Gastrocnemius medialis (tissue), 4 donors: ENCODE measurements at regions of chr4 and their contacts with region 1.

Region 1: DNA sequence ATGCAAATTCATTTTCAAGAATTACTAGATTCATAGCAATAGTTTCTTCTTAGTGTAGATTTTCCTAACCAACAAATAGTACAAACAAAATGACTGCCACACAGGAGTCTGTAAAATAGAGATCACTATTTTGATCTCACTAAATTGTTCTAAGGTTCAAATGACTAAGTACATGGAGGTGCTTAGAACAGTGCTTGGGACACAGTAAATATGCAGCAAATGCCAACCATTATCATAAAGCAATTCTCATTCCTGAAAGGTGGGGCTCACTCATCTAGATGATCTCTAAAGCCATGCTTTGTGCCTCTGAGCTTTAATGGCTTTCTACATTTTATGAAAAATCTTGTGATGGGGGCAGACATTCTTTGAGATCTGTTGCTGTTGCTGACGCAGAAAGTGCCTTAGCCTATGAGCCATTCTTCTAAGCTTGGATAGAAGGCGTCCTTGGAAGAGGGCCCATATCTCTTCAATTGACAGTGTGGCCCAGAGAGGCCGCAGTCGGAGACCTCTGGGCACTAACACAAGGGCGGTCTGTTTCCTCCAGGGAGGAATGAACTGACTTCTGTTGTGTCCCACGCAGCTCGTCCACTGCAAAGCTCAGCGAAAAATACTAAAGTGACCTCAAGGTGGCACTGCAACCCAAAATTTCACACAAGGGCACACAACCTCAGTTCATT is 23.5 kb downstream of the TLR10 start:
- DNase-seq: peak; percentile 23 to 24
- ATAC-seq: peak; percentile 50 to 62
- H3K4me3 ChIP-seq: no peak overlapping the region
- H3K27ac ChIP-seq: no peak overlapping the region
- H3K4me1 ChIP-seq: no peaks in the 10 kb centered on the region
- H3K27me3 ChIP-seq: no peaks in the 10 kb centered on the region
- CTCF ChIP-seq: peak; percentile 28 to 66 (median 48)
- POLR2A ChIP-seq: no peak

Region 2: GRCh38 chr4:38782452-38783108 is 23.3 kb after region 1 on chr4 and contains the start of gene TLR10:
- in situ Hi-C with region 1: no loop called
- intact Hi-C with region 1: loop called (anchors 2 kb)
- DNase-seq: no peak
- ATAC-seq: peak; percentile 56 to 60
- H3K4me3 ChIP-seq: no peak within 1 kb of the TSS
- H3K27ac ChIP-seq: no peak within 1 kb of the TSS
- H3K4me1 ChIP-seq: no peaks in the 10 kb centered on the region
- H3K27me3 ChIP-seq: no peaks in the 10 kb centered on the region
- CTCF ChIP-seq: peak; percentile 31 to 66 (median 56)
- POLR2A ChIP-seq: no peak
- total RNA-seq, gene TLR10: not detected

Region 3: GRCh38 chr4:38856524-38857337 is 97.5 kb after region 1 on chr4 and contains the start of gene TLR6:
- in situ Hi-C with region 1: loop called in 2 of 4 experiments (anchors 5 kb)
- intact Hi-C with region 1: loop called (anchors 5 kb)
- DNase-seq: no peak
- ATAC-seq: peak; percentile 63 to 72
- H3K4me3 ChIP-seq: peak within 1 kb of the TSS in 2 of 4 donors; percentile 23 to 32
- H3K27ac ChIP-seq: peak within 1 kb of the TSS; percentile 56 to 60 (median 58)
- H3K4me1 ChIP-seq: peaks cover 3 to 8% of the 10 kb centered on the region in 2 donors
- H3K27me3 ChIP-seq: no peaks in the 10 kb centered on the region
- CTCF ChIP-seq: peak in 4 of 5 experiments; percentile 55 to 75 (median 68)
- POLR2A ChIP-seq: no peak
- total RNA-seq, gene TLR6: 0.29 to 0.75 (median 0.48) TPM

Region 4: DNA sequence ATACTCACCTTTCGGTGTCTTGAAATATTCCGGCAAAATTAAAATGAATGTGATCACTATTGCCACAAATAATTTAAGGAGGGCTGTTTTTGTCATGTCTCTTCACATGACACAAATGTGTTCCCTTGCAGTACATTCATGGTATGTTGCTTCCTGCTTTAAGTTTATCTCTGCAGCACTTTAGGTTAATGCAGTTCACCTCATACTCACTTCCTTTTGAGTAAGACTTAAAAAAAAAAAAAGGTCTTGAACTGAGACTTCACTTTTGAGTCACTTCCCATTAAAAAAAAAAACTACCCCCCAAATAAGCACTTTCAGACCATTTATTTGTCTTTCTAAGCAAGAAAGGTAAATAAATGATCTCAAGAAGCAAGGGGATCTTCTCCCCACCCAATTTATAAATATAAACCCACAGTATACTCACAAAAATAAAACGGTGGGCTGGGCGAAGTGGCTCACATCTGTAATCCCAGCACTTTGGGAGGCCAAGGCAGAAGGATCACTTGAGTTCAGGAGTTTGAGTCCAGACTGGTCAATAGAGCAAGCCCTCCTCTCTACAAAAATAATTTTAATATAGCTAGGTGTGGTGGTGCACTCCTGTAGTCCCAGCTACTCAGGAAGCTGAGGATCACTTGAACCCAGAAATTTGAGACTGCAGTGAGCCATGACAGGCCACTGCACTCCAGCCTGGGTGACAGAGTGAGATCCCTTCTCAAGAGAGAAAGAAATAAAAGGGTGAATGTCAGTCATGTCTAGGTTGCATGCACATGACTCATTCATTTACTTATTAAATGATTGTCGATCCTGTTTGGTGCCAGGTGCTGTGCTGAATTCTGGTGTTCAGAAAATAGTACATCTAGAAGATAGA is 273.2 kb after region 1 on chr4 and contains the start of gene TMEM156:
- in situ Hi-C with region 1: no loop called
- intact Hi-C with region 1: no loop called
- DNase-seq: no peak
- ATAC-seq: no peak
- H3K4me3 ChIP-seq: no peak within 1 kb of the TSS
- H3K27ac ChIP-seq: no peak within 1 kb of the TSS
- H3K4me1 ChIP-seq: no peaks in the 10 kb centered on the region
- H3K27me3 ChIP-seq: no peaks in the 10 kb centered on the region
- CTCF ChIP-seq: no peak
- POLR2A ChIP-seq: no peak
- total RNA-seq, gene TMEM156: not detected

Region 5: DNA sequence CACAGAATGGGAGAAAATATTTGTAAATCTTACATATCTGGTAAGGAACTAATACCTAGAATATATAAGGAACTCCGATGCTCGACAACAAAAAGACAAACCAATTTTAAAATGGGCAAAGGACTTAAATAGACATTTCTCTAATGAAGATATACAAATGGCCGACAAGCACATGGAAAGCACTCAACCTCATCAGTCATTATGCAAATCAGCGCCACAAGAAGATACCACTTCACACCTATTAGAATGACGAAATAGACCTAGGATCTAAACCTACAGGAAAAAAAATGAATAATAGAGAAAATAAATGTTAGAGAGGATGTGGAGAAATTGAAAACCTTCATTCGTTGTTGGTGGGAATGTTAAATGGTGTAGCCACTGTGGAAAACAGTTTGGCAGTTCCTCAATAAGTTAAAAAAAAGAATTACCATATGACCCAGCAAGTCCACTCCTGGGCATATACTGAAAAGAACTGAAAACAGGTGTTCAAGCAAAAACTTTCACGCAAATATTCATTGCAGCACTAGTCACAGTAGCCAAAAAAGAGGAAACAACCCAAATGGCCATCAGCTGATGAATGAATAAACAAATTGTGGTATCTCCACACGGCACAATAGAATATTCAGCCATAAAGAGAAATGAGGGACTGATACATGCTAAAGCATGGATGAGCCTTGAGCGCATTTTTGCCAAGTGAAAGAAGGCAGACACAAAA is 365.8 kb after region 1 on chr4:
- in situ Hi-C with region 1: loop called in 1 of 4 experiments (anchors 25 kb)
- intact Hi-C with region 1: no loop called
- DNase-seq: no peak
- ATAC-seq: no peak
- H3K4me3 ChIP-seq: no peak overlapping the region
- H3K27ac ChIP-seq: no peak overlapping the region
- H3K4me1 ChIP-seq: no peaks in the 10 kb centered on the region
- H3K27me3 ChIP-seq: no peaks in the 10 kb centered on the region
- CTCF ChIP-seq: no peak
- POLR2A ChIP-seq: no peak

Region 6: DNA sequence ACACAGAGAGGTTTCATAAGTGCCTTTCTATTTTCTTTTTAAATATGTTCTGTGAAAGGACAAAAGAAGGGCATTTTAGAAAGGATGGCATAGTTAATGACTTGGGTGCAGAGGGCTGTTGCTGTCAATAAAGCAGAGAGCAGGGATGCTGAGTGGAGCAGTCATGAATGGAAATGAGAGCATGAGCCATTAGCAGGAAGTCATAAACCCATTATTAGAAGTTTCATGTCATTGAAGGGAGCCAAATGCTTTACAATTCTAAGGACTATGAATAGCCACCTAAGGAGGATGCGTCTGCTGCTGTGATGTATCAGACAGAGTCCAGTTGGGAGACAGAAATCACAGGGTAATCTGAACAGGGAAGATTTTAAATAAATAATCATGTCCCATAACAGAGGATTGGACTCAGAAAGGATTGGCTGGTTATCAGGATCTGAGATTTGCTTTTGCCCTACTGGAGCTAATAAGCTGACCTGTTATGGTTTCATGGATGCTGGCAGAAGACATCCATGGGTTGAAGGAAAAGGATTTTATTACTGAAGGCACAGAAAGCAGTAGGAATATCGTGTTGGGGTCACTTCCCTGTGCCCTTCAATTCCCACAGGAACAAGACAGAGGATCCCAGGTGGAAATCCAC is 375.6 kb after region 1 on chr4:
- in situ Hi-C with region 1: loop called in 1 of 4 experiments (anchors 25 kb)
- intact Hi-C with region 1: loop called (anchors 2 kb)
- DNase-seq: no peak
- ATAC-seq: peak in 1 of 2 donors; percentile 21
- H3K4me3 ChIP-seq: no peak overlapping the region
- H3K27ac ChIP-seq: no peak overlapping the region
- H3K4me1 ChIP-seq: no peaks in the 10 kb centered on the region
- H3K27me3 ChIP-seq: no peaks in the 10 kb centered on the region
- CTCF ChIP-seq: no peak
- POLR2A ChIP-seq: no peak